HAP-1 (cell line): ENCODE measurements at regions of chr2 and their contacts with region 1.

Region 1: GRCh38 chr2:217510771-217511291 is 492.0 kb downstream of the TNS1 start:
- DNase-seq: peak; percentile 81 to 88
- H3K4me3 ChIP-seq: no peak overlapping the region
- H3K4me1 ChIP-seq: peaks cover 5% of the 10 kb centered on the region; the same call in 1 of the 2 replicates
- H3K27me3 ChIP-seq: no peaks in the 10 kb centered on the region

Region 2: DNA sequence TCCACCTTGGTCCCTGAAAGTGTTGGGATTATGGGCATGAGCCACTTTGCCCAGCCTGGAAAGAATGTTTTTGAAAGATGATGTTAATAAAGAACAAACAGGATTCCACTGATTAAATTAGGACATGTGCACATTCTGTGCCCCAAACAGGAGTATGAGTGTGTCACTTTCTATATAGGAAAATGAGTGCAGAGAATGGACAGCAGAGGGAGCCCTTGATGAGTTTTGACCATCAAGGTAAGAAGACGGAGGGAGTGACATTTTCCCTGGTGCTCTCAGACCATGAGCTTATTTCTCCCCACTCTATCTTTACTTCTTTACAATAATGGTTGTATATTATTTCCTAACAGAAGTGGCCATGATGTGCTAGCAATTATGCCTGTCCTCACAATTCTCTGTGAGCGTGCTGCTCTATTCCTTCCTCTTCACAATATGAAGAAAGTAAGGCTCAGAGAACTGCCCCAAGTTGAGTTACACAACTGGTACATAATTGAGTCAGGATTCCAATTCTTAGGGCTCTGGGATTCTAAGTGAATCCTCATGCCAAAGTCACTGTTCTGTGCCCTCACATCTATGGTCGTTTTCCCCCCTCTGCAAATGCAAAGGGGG is 991.6 kb before region 1 on chr2:
- in situ Hi-C with region 1: loop called (anchors 25 kb)
- DNase-seq: peak; percentile 67 to 80
- H3K4me3 ChIP-seq: no peak overlapping the region
- H3K4me1 ChIP-seq: no peaks in the 10 kb centered on the region
- H3K27me3 ChIP-seq: no peaks in the 10 kb centered on the region

Region 3: GRCh38 chr2:216692636-216693413 is 818.0 kb before region 1 on chr2:
- in situ Hi-C with region 1: loop called (anchors 5 kb)
- DNase-seq: peak; percentile 92 to 97
- H3K4me3 ChIP-seq: peak overlapping the region; percentile 47
- H3K4me1 ChIP-seq: peaks cover 44% of the 10 kb centered on the region
- H3K27me3 ChIP-seq: no peaks in the 10 kb centered on the region

Region 4: DNA sequence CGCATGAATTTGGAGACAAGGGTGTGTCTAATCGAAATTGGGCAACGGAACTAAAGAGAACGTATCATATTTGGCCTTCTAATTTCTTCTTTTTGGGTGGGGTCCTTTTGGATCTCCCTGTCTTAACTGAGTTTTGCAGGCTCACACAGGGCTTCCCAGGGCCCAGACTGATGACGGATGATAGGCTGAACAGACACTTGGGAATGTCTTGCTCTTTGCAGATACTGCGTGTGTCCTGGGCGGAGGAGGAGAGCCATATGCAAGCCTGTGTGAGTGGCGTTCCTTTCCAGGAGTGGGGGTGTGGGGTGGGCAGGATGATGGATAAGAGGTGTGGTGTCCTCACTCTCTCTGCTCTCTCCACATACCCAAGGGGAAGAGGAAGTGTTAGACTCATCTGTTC is 691.1 kb before region 1 on chr2:
- in situ Hi-C with region 1: no loop called
- DNase-seq: no peak
- H3K4me3 ChIP-seq: no peak overlapping the region
- H3K4me1 ChIP-seq: no peaks in the 10 kb centered on the region
- H3K27me3 ChIP-seq: peaks cover 9% of the 10 kb centered on the region